Aorta (tissue), 5 donors: ENCODE measurements at regions of chr19 and their contacts with region 1.

Region 1: DNA sequence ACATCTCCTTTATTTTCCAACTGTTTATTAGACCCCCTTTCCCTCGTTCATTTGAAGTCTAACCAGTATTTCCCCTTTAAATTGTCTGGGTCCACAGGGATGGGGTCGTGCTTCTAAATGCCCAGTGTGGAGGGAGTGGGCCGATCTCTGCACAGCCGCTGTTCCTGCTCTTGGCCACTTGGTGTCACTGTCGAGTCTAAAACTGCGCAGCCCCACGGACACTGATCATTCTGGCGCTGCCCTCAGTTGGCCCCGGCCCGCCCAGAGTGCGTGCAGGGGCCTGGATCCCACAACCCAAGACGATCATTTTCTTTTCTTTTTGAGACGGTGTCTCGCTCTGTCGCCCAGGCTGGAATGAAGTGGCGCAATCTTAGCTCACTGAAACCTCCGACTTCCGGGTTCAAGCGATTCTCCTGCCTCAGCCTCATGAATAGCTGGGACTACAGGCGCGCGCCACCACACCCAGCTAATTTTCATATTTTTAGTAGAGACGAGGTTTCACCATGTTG is 12.0 kb downstream of the WDR88 start:
- DNase-seq: peak; percentile 65 to 84
- ATAC-seq: peak; percentile 94
- H3K4me3 ChIP-seq: no peak overlapping the region
- H3K27ac ChIP-seq: no peak overlapping the region
- H3K4me1 ChIP-seq: no peaks in the 10 kb centered on the region
- H3K27me3 ChIP-seq: no peaks in the 10 kb centered on the region

Region 2: DNA sequence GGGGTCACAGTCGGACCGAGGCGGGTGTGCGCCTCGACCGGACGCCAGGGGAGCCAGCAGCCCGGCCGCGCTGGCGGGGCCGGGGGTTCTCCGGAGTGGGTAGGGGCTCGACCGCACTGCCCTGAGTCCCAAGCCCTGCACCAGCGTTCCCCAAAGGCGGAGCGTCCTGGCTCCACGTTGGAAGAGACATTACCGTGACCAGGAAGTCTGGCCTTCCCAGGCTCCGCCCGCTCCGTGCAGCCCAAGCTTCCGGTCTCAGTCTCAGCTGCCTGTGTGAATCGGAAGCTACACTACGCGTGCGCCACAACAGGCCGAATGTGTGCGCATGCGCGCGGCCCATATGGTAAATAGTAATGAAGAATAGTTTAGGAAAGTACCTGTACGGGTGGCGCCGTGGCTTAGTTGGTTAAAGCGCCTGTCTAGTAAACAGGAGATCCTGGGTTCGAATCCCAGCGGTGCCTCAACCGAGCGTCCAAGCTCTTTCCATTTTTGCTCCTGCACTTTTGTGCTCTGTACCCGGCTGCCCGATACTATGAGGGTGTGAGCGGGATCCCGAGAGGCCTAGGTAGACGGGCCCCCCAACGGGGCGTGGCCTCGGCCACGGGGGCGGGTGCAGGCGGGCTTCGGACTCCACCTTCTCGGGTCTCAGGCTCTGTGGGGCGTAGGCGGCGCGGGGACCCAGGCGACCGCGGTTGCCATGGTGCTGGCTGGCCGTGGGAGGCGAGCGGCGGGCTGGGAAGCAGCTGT is 32.9 kb after region 1 on chr19:
- intact Hi-C with region 1: loop called in 1 of 2 experiments (anchors 5 kb)
- DNase-seq: peak; percentile 97 to 98
- ATAC-seq: peak; percentile 97
- H3K4me3 ChIP-seq: peak overlapping the region; percentile 59 to 79
- H3K27ac ChIP-seq: peak overlapping the region; percentile 67 to 86
- H3K4me1 ChIP-seq: no peaks in the 10 kb centered on the region
- H3K27me3 ChIP-seq: no peaks in the 10 kb centered on the region

Region 3: DNA sequence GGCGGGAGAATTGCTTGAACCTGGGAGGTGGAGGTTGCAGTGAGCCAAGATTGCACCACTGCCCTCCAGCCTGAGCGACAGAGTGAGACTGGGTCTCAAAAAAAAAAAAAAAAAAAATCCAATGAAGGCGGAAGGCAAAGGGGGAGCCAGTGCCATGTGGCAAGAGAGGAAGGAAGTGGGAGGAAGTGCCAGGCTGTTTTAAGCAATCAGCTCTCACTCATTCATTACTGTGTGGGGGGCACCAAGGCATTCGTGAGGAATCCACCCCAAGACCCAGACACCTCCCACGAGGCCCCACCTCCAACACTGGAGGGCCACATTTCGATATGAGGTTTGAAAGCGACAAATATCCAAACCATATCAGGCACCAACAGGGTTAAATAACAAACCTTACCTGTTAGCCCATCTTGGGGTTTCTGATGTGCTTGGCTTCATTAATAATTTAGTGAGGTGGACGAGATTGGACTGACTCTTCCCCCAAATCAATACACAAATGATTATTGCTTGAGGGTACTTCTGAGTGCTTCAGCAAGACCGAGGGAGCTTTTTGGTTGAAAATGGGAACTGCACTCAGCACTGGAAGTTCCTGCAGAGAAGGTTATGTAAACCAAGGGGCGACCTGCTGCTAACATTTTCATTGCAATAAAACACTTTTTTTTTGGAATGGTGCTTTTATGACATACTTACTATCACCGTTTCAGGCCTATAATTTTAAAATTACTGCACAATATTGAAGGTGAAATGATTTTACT is 42.7 kb after region 1 on chr19:
- intact Hi-C with region 1: loop called (anchors 2 to 5 kb)
- DNase-seq: peak; percentile 16 to 20
- ATAC-seq: no peak
- H3K4me3 ChIP-seq: no peak overlapping the region
- H3K27ac ChIP-seq: no peak overlapping the region
- H3K4me1 ChIP-seq: peaks cover 0 to 2% of the 10 kb centered on the region in 2 donors
- H3K27me3 ChIP-seq: no peaks in the 10 kb centered on the region